GM12878 (cell line): ENCODE measurements at regions of chr2 and their contacts with region 1.

Region 1: DNA sequence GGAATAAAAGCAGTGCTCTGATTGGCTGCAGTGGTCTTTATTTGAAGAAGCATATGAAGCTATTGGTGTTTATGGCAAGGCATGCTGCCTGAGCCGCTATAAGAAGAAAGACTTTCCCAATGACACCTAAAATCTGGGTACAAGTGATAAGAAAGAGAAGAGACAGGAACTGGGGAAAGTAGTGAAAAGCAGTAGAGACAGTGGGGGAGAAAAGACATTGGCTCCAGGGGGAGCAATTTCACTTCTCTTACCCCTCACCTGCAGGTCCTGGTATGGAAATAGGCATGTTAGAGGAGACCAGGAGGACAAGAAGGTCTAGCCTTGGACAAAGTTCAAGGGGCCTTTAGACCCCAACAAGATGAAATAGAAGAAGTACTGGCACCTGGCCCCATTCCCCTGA is 47.1 kb downstream of the PLCL1 start:
- DNase-seq: no peak
- ATAC-seq: peak; percentile 77
- H3K4me3 ChIP-seq: no peak overlapping the region
- H3K27ac ChIP-seq: no peak overlapping the region
- H3K4me1 ChIP-seq: no peaks in the 10 kb centered on the region
- H3K27me3 ChIP-seq: no peaks in the 10 kb centered on the region
- CTCF ChIP-seq: peak; percentile 28 to 57 (median 33); a peak in 4 of 6 replicates
- EP300 ChIP-seq: no peak
- POLR2A ChIP-seq: no peak
- RAD21 ChIP-seq: peak; percentile 72

Region 2: DNA sequence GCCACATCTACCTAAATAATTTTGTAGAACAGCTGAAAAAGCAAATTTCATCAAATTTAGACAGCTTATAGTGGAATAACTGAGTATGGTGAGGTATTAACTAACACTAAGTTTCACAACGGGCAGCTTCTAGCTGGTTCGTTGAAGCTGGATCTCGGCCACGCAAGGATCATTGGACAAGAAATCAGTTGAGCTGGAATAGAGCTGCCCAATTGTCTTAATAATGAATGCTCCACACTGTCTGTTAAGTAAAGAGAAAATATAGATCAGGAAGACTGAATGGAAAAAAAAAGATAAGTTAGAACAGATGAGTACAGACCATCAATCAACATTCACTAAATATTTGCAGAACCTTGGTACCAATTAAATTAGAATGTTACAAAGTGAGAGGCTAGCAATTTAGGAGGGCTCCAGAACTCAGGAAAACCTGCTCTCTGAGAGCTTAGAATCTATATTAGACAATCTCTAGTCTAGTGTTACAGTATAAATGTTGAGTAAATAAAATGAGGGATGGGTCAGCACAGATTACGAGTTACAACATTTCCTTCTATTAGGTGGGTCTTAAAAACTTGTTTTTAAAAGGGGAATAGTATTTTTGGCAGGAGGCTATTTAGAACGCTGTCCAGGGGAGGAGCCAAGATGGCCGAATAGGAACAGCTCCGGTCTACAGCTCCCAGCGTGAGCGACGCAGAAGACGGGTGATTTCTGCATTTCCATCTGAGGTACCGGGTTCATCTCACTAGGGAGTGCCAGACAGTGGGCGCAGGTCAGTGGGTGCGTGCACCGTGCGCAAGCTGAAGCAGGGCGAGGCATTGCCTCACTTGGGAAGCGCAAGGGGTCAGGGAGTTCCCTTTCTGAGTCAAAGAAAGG is 122.9 kb before region 1 on chr2:
- CTCF ChIA-PET with region 1: no interaction called
- POLR2A ChIA-PET with region 1: no interaction called
- RAD21 ChIA-PET with region 1: no interaction called
- SMC1A ChIA-PET with region 1: no interaction called
- in situ Hi-C with region 1: no loop called
- intact Hi-C with region 1: no loop called
- DNase-seq: no peak
- ATAC-seq: no peak
- H3K4me3 ChIP-seq: no peak overlapping the region
- H3K27ac ChIP-seq: no peak overlapping the region
- H3K4me1 ChIP-seq: no peaks in the 10 kb centered on the region
- H3K27me3 ChIP-seq: no peaks in the 10 kb centered on the region
- CTCF ChIP-seq: no peak
- EP300 ChIP-seq: no peak
- POLR2A ChIP-seq: no peak
- RAD21 ChIP-seq: no peak

Region 3: DNA sequence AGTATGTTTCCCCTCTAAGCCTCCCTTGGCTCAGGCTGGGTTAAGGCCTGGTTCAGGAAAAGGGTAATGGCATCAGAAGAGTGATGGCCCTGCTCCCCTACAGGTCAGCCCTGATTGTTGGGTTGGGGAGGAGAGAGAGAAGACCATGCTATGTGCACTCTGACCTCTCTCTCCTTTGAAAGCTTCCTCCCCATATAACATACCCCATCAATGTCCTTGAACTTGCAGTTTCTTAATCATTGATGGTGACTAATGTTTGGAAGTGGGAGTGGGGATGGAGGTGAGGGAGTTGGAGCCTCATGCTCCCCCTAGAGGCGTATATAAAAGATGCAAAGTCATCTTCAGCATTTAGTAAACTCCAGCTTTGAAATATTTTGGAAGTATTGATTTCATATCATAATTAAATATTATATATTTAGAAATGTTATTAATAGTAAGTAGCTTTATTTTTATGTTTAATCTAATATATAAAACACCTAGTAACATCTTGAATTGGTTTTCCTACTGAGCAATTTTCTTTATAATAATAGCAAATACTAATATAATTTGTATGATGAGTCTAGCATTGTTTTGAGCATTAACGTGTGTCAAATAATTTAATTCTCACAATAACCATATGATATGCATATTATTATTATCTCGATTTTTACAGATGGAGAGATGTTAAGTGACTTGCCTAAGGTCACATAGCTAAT is 38.2 kb before region 1 on chr2:
- CTCF ChIA-PET with region 1: interaction called, 7 read pairs
- POLR2A ChIA-PET with region 1: interaction called, 3 read pairs
- RAD21 ChIA-PET with region 1: interaction called, 6 read pairs
- SMC1A ChIA-PET with region 1: interaction called, 13 read pairs
- in situ Hi-C with region 1: no loop called
- intact Hi-C with region 1: no loop called
- DNase-seq: no peak
- ATAC-seq: peak; percentile 64
- H3K4me3 ChIP-seq: no peak overlapping the region
- H3K27ac ChIP-seq: no peak overlapping the region
- H3K4me1 ChIP-seq: no peaks in the 10 kb centered on the region
- H3K27me3 ChIP-seq: peaks cover 0 to 3% of the 10 kb centered on the region in 2 experiments; a peak in 1 of 4 replicates
- CTCF ChIP-seq: peak; percentile 43 to 61 (median 56)
- EP300 ChIP-seq: no peak
- POLR2A ChIP-seq: no peak
- RAD21 ChIP-seq: no peak

Region 4: GRCh38 chr2:197838036-197838435 is 13.4 kb before region 1 on chr2:
- CTCF ChIA-PET with region 1: interaction called, 12 read pairs
- POLR2A ChIA-PET with region 1: no interaction called
- RAD21 ChIA-PET with region 1: interaction called, 12 read pairs
- SMC1A ChIA-PET with region 1: interaction called, 35 read pairs
- in situ Hi-C with region 1: no loop called
- intact Hi-C with region 1: no loop called
- DNase-seq: peak; percentile 30
- ATAC-seq: peak; percentile 97
- H3K4me3 ChIP-seq: no peak overlapping the region
- H3K27ac ChIP-seq: no peak overlapping the region
- H3K4me1 ChIP-seq: no peaks in the 10 kb centered on the region
- H3K27me3 ChIP-seq: no peaks in the 10 kb centered on the region
- CTCF ChIP-seq: no peak
- EP300 ChIP-seq: no peak
- POLR2A ChIP-seq: no peak
- RAD21 ChIP-seq: no peak

Region 5: GRCh38 chr2:197867624-197868023 is 16.2 kb after region 1 on chr2:
- CTCF ChIA-PET with region 1: interaction called, 7 read pairs
- POLR2A ChIA-PET with region 1: interaction called, 3 read pairs
- RAD21 ChIA-PET with region 1: interaction called, 5 read pairs
- SMC1A ChIA-PET with region 1: interaction called, 18 read pairs
- in situ Hi-C with region 1: no loop called
- intact Hi-C with region 1: no loop called
- DNase-seq: no peak
- ATAC-seq: no peak
- H3K4me3 ChIP-seq: no peak overlapping the region
- H3K27ac ChIP-seq: no peak overlapping the region
- H3K4me1 ChIP-seq: no peaks in the 10 kb centered on the region
- H3K27me3 ChIP-seq: peaks cover 0 to 4% of the 10 kb centered on the region in 2 experiments; a peak in 1 of 4 replicates
- CTCF ChIP-seq: no peak
- EP300 ChIP-seq: no peak
- POLR2A ChIP-seq: no peak
- RAD21 ChIP-seq: no peak

Region 6: DNA sequence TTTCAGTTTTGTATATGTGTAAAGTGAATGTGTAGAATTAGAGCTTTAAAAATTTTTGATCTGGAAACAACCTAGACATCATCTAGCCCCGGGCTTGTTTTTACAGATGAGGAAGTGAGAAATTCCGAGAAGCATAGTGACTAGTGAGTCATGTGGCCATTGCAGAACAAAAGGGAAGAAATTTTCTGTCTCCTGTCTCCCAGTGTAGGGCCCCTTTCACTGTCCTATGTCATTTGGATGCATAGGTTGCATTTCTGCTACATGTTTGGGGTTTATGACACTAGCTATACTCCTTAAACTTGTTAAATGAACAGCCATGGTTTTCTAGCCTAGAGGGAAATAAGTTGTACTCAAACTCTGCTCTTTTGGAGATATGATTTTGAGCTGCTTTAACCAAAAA is 37.6 kb after region 1 on chr2:
- CTCF ChIA-PET with region 1: interaction called, 4 read pairs
- POLR2A ChIA-PET with region 1: no interaction called
- RAD21 ChIA-PET with region 1: interaction called, 6 read pairs
- SMC1A ChIA-PET with region 1: interaction called, 13 read pairs
- in situ Hi-C with region 1: no loop called
- intact Hi-C with region 1: no loop called
- DNase-seq: peak; percentile 77
- ATAC-seq: peak; percentile 98
- H3K4me3 ChIP-seq: no peak overlapping the region
- H3K27ac ChIP-seq: peak overlapping the region; percentile 27; the same call in 1 of the 2 replicates
- H3K4me1 ChIP-seq: peaks cover 4% of the 10 kb centered on the region
- H3K27me3 ChIP-seq: no peaks in the 10 kb centered on the region
- CTCF ChIP-seq: no peak
- EP300 ChIP-seq: peak; percentile 37 to 83; a peak in 2 of 4 replicates
- POLR2A ChIP-seq: no peak
- RAD21 ChIP-seq: no peak

Region 7: GRCh38 chr2:198053776-198054698 is 202.6 kb after region 1 on chr2:
- CTCF ChIA-PET with region 1: interaction called, 57 read pairs
- POLR2A ChIA-PET with region 1: no interaction called
- RAD21 ChIA-PET with region 1: interaction called, 12 read pairs
- SMC1A ChIA-PET with region 1: interaction called, 28 read pairs
- in situ Hi-C with region 1: no loop called
- intact Hi-C with region 1: loop called (anchors 1 kb)
- DNase-seq: no peak
- ATAC-seq: peak; percentile 97
- H3K4me3 ChIP-seq: no peak overlapping the region
- H3K27ac ChIP-seq: no peak overlapping the region
- H3K4me1 ChIP-seq: no peaks in the 10 kb centered on the region
- H3K27me3 ChIP-seq: no peaks in the 10 kb centered on the region
- CTCF ChIP-seq: peak; percentile 47 to 65 (median 59)
- EP300 ChIP-seq: no peak
- POLR2A ChIP-seq: no peak
- RAD21 ChIP-seq: peak; percentile 80

Region 8: DNA sequence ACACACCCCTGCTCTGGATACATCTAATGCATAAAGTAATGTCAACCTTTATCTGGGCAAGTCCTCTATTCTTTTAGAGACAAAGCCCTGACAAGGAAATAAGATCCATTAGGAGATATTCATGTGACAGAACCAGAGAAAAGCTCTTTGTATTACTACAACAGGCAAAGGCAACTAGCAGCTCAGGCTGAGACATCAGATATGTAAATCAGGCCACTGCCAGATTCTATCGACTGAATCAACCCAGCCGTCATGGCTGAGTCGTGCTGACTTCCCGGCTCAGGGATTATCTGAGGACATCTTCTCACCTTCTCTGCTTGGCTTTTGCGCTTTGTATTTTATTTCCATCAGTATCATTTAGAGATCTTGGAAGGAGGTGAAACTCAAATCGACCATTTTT is 247.5 kb after region 1 on chr2:
- CTCF ChIA-PET with region 1: interaction called, 11 read pairs
- POLR2A ChIA-PET with region 1: interaction called, 3 read pairs
- RAD21 ChIA-PET with region 1: interaction called, 3 read pairs
- SMC1A ChIA-PET with region 1: interaction called, 9 read pairs
- in situ Hi-C with region 1: no loop called
- intact Hi-C with region 1: no loop called
- DNase-seq: no peak
- ATAC-seq: no peak
- H3K4me3 ChIP-seq: no peak overlapping the region
- H3K27ac ChIP-seq: no peak overlapping the region
- H3K4me1 ChIP-seq: peaks cover 2% of the 10 kb centered on the region; the same call in 1 of the 2 replicates
- H3K27me3 ChIP-seq: no peaks in the 10 kb centered on the region
- CTCF ChIP-seq: no peak
- EP300 ChIP-seq: no peak
- POLR2A ChIP-seq: no peak
- RAD21 ChIP-seq: no peak